H1 (cell line): ENCODE measurements at regions of chr1 and their contacts with region 1.

Region 1: GRCh38 chr1:204080163-204080903 is 7.4 kb downstream of the SOX13 start:
- DNase-seq: peak; percentile 97
- H3K4me3 ChIP-seq: peak overlapping the region in 3 of 4 experiments; percentile 18 to 49 (median 36); a peak in 5 of 8 replicates
- H3K27ac ChIP-seq: peak overlapping the region; percentile 87
- H3K4me1 ChIP-seq: peaks cover 40 to 79% (median 69%) of the 10 kb centered on the region in 4 experiments
- H3K27me3 ChIP-seq: no peaks in the 10 kb centered on the region
- CTCF ChIP-seq: no peak
- EP300 ChIP-seq: peak in 1 of 2 experiments; percentile 82; a peak in 1 of 3 replicates
- POLR2A ChIP-seq: peak; percentile 66 to 83
- RAD21 ChIP-seq: no peak; a peak in 2 of 4 replicates

Region 2: DNA sequence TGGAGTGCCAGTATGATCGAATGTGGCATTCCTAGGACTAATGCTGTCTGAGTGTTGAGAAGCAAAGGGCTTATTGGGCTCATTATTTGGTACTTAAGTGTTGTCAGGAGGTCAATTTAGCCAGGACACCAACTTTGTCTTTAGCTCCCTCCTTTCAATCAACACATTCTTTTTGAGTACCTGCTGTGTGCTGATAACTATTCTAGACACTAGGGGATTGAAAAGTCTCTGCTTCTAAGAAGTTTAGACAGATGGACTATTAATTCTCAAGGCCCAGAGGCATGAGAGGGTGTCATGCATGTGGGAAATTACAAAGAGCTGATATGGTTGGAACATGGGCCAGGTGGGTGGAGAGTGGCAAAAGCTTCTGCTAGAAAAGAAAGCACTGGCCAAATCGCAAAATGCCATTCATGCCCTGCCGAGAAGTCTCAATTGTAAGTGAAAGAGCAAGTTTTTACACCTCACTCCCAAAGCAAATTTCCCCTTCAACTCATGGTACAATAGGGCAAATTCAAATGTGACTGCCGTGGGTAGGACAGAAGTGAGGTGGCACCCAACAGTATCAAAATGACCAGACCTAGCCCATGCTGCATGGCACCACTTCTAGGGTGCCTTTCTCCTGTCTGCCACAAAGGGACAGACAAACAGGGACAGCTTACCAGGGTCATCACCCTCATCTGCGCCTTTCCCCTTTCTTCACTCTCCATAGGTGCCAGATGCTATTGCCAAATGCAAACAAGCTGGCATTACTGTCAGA is 368.9 kb before region 1 on chr1:
- CTCF ChIA-PET with region 1: no interaction called
- POLR2A ChIA-PET with region 1: no interaction called
- DNase-seq: no peak
- H3K4me3 ChIP-seq: no peak overlapping the region
- H3K27ac ChIP-seq: no peak overlapping the region
- H3K4me1 ChIP-seq: no peaks in the 10 kb centered on the region
- H3K27me3 ChIP-seq: no peaks in the 10 kb centered on the region
- CTCF ChIP-seq: no peak
- EP300 ChIP-seq: no peak
- POLR2A ChIP-seq: no peak
- RAD21 ChIP-seq: no peak

Region 3: DNA sequence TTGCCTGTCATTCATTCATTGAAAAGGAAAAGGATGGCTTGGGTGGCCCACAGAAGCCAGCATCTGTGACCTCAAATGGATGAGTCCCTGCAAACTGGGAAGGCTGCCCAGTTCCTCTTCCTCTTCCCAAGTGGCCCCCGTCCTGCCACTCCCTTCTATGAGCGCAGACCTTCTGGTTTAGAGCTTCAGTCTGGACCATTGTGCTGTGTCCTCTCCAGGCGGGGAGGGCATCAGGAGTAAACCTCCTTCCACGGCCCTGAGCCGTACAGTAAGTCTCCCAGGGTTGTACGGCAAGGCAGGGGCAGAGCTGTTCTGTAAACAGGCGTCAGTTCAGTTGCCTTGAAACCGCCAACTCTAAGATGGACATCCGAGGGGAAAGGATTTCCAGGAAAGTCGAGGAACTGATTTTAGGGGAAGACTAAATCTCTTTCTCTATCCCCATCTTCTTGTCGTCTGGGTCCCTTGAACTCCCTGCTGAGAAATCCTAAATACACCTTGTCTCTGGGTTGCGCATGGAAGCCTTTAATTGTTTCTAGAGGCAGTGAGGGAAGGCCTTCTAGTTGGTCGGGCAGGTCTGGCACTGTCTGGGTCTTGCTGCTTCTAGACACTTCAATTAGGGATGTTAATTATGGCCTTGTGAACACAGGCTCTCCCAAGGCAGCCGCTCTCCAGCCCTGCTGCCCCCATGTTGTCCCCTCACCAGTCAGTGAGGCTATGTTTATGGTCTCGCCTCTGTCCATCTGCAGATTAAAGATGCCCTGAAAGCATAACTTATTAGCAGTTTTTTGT is 14.7 kb after region 1 on chr1:
- CTCF ChIA-PET with region 1: interaction called, 17 read pairs
- POLR2A ChIA-PET with region 1: interaction called, 101 read pairs
- DNase-seq: peak in 1 of 2 experiments; percentile 56
- H3K4me3 ChIP-seq: peak overlapping the region in 1 of 4 experiments; percentile 34; a peak in 1 of 8 replicates
- H3K27ac ChIP-seq: no peak overlapping the region
- H3K4me1 ChIP-seq: peaks cover 20 to 44% (median 30%) of the 10 kb centered on the region in 4 experiments
- H3K27me3 ChIP-seq: no peaks in the 10 kb centered on the region
- CTCF ChIP-seq: no peak
- EP300 ChIP-seq: no peak
- POLR2A ChIP-seq: no peak
- RAD21 ChIP-seq: no peak

Region 4: GRCh38 chr1:204104133-204104871 is 24.0 kb after region 1 on chr1:
- CTCF ChIA-PET with region 1: interaction called, 5 read pairs
- POLR2A ChIA-PET with region 1: interaction called, 21 read pairs
- DNase-seq: no peak
- H3K4me3 ChIP-seq: no peak overlapping the region
- H3K27ac ChIP-seq: no peak overlapping the region
- H3K4me1 ChIP-seq: peaks cover 27 to 55% (median 36%) of the 10 kb centered on the region in 4 experiments
- H3K27me3 ChIP-seq: no peaks in the 10 kb centered on the region
- CTCF ChIP-seq: no peak
- EP300 ChIP-seq: no peak
- POLR2A ChIP-seq: no peak
- RAD21 ChIP-seq: no peak

Region 5: GRCh38 chr1:204114606-204115005 is 34.3 kb after region 1 on chr1:
- CTCF ChIA-PET with region 1: interaction called, 4 read pairs
- POLR2A ChIA-PET with region 1: interaction called, 17 read pairs
- DNase-seq: no peak
- H3K4me3 ChIP-seq: no peak overlapping the region
- H3K27ac ChIP-seq: no peak overlapping the region
- H3K4me1 ChIP-seq: peaks cover 0 to 18% (median 13%) of the 10 kb centered on the region in 4 experiments; a peak in 6 of 7 replicates
- H3K27me3 ChIP-seq: no peaks in the 10 kb centered on the region; a peak in 1 of 7 replicates
- CTCF ChIP-seq: no peak
- EP300 ChIP-seq: no peak
- POLR2A ChIP-seq: no peak
- RAD21 ChIP-seq: no peak

Region 6: GRCh38 chr1:204123376-204123775 is 43.0 kb after region 1 on chr1:
- CTCF ChIA-PET with region 1: interaction called, 107 read pairs
- POLR2A ChIA-PET with region 1: interaction called, 15 read pairs
- DNase-seq: peak in 1 of 2 experiments; percentile 85
- H3K4me3 ChIP-seq: no peak overlapping the region
- H3K27ac ChIP-seq: no peak overlapping the region
- H3K4me1 ChIP-seq: peaks cover 0 to 16% (median 2%) of the 10 kb centered on the region in 4 experiments; a peak in 5 of 7 replicates
- H3K27me3 ChIP-seq: no peaks in the 10 kb centered on the region; a peak in 1 of 7 replicates
- CTCF ChIP-seq: peak in 2 of 3 experiments; percentile 84 to 87; a peak in 3 of 4 replicates
- EP300 ChIP-seq: no peak
- POLR2A ChIP-seq: no peak
- RAD21 ChIP-seq: peak; percentile 81 to 87